Caco-2 (cell line): ENCODE measurements at regions of chr9 and their contacts with region 1.

Region 1: DNA sequence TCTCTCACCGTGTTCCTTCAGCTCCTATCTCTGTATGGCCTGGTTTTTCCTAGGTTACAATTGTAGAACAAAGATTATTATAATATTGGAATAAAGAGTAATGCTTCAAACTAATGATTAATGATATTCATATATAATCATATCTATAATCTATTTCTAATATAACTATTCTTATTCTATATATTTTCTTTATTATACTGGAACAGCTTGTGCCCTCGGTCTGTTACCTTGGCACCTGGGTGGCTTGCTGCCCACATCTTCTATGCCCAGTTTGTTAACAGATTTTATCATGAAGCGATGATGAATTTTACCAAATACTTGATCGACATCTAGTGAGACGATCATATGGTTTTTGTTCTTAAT is 363.6 kb upstream of the TYRP1 start:
- DNase-seq: no peak
- H3K4me3 ChIP-seq: no peak overlapping the region
- H3K4me3 Mint-ChIP-seq: no peak overlapping the region
- H3K27ac Mint-ChIP-seq: no peak overlapping the region
- H3K4me1 ChIP-seq: no peaks in the 10 kb centered on the region
- H3K4me1 Mint-ChIP-seq: no peaks in the 10 kb centered on the region
- H3K27me3 ChIP-seq: no peaks in the 10 kb centered on the region
- H3K27me3 Mint-ChIP-seq: no peaks in the 10 kb centered on the region
- CTCF ChIP-seq: no peak

Region 2: DNA sequence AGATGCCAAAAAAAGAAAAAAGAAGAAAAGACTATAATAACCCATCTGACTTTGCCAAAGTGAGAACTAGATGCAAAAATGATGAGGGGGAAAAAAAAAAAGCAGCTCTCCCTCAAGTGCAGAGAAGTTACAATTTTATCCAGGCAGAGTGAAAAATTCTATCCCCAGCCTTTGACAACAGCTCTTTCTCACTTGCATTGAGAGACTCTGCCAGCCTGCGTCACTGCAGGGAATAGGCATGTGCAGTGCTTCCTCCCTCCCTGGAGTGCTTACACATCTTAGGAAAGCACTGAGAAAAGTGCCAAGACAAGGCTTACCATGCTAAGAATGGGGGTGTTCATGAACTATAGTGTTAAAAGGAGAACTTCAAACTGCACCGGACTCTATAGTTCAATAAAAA is 55.0 kb before region 1 on chr9:
- CTCF ChIA-PET with region 1: no interaction called
- POLR2A ChIA-PET with region 1: no interaction called
- intact Hi-C with region 1: loop called (anchors 10 kb)
- DNase-seq: no peak
- H3K4me3 ChIP-seq: no peak overlapping the region
- H3K4me3 Mint-ChIP-seq: no peak overlapping the region
- H3K27ac Mint-ChIP-seq: no peak overlapping the region
- H3K4me1 ChIP-seq: no peaks in the 10 kb centered on the region
- H3K4me1 Mint-ChIP-seq: no peaks in the 10 kb centered on the region
- H3K27me3 ChIP-seq: no peaks in the 10 kb centered on the region
- H3K27me3 Mint-ChIP-seq: peaks cover 2% of the 10 kb centered on the region
- CTCF ChIP-seq: no peak

Region 3: GRCh38 chr9:12469084-12469483 is 139.5 kb after region 1 on chr9:
- CTCF ChIA-PET with region 1: no interaction called
- POLR2A ChIA-PET with region 1: no interaction called
- intact Hi-C with region 1: no loop called
- DNase-seq: no peak
- H3K4me3 ChIP-seq: no peak overlapping the region
- H3K4me3 Mint-ChIP-seq: no peak overlapping the region
- H3K27ac Mint-ChIP-seq: no peak overlapping the region
- H3K4me1 ChIP-seq: no peaks in the 10 kb centered on the region
- H3K4me1 Mint-ChIP-seq: no peaks in the 10 kb centered on the region
- H3K27me3 ChIP-seq: no peaks in the 10 kb centered on the region
- H3K27me3 Mint-ChIP-seq: peaks cover 6% of the 10 kb centered on the region
- CTCF ChIP-seq: no peak